Thyroid gland (tissue), 4 donors: ENCODE measurements at regions of chr17 and their contacts with region 1.

Region 1: DNA sequence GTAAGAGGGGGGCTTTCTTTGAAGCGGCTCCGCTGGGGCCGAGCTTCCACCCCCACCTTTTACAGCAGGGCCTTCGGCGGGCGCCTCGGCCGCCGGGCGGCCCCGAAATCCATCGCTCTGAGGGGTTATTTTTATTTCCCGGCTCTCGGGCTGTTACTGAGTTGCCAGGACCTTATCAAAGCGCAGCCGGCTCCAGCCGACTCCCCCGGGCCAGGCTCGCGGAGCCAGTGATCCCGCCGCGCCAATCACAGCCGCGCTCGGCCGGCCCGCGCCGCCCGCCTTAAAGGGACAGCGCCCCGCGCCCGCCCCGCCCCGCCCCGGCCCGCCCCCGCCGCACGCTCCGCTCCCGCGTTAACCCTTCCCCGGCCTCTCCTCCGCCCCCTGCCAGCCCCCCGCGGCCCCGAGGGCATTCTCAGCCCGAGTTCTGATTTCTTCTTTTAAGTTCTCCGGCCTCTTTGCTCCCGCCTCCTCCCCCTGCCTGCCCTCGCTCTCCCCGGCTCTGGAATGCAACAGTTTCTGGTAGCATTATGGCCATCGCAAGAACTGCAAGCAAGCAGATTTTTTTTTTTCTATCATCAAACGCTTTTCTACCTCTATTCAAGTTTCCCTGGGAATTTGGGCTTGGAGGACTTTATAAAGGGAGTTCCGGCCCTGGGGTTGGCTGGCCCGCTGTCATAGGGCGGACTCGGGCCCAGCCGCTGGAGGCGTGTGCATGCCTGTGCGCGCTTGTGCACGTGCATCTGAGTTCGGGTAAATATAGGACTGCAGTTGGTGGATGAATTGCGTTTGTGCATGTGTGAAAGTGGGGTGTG is at the start of gene AXIN2:
- DNase-seq: peak; percentile 91 to 93
- H3K4me3 ChIP-seq: peak within 1 kb of the TSS; percentile 11 to 97 (median 88)
- H3K27ac ChIP-seq: peak within 1 kb of the TSS in 2 of 3 donors; percentile 86 to 95
- H3K4me1 ChIP-seq: peaks cover 6 to 22% of the 10 kb centered on the region in 2 donors
- H3K27me3 ChIP-seq: no peaks in the 10 kb centered on the region
- CTCF ChIP-seq: peak in 5 of 6 experiments; percentile 9 to 60 (median 36)
- POLR2A ChIP-seq: no peak
- total RNA-seq, gene AXIN2: 23.9 to 54.3 (median 42.8) TPM

Region 2: GRCh38 chr17:65988081-65988850 is 426.7 kb after region 1 on chr17:
- intact Hi-C with region 1: loop called (anchors 10 kb)
- DNase-seq: peak in 1 of 2 donors; percentile 3
- H3K4me3 ChIP-seq: no peak overlapping the region
- H3K27ac ChIP-seq: no peak overlapping the region
- H3K4me1 ChIP-seq: no peaks in the 10 kb centered on the region
- H3K27me3 ChIP-seq: no peaks in the 10 kb centered on the region
- CTCF ChIP-seq: peak; percentile 37 to 87 (median 64)
- POLR2A ChIP-seq: no peak